Left colon (tissue), 2 donors: ENCODE measurements at regions of chr1 and their contacts with region 1.

Region 1: GRCh38 chr1:1954831-1955441 is 35.9 kb upstream of the TMEM52 start:
- DNase-seq: no peak
- ATAC-seq: no peak

Region 2: GRCh38 chr1:1891349-1892078 is 63.4 kb before region 1 on chr1:
- intact Hi-C with region 1: no loop called
- DNase-seq: peak; percentile 84 to 86
- ATAC-seq: peak; percentile 44

Region 3: GRCh38 chr1:2044510-2045319 is 89.8 kb after region 1 on chr1:
- intact Hi-C with region 1: loop called (anchors 5 to 10 kb)
- DNase-seq: peak; percentile 40 to 81
- ATAC-seq: peak; percentile 24